ENCODE measurements at regions of chr10 and their contacts with region 1.

Region 1: DNA sequence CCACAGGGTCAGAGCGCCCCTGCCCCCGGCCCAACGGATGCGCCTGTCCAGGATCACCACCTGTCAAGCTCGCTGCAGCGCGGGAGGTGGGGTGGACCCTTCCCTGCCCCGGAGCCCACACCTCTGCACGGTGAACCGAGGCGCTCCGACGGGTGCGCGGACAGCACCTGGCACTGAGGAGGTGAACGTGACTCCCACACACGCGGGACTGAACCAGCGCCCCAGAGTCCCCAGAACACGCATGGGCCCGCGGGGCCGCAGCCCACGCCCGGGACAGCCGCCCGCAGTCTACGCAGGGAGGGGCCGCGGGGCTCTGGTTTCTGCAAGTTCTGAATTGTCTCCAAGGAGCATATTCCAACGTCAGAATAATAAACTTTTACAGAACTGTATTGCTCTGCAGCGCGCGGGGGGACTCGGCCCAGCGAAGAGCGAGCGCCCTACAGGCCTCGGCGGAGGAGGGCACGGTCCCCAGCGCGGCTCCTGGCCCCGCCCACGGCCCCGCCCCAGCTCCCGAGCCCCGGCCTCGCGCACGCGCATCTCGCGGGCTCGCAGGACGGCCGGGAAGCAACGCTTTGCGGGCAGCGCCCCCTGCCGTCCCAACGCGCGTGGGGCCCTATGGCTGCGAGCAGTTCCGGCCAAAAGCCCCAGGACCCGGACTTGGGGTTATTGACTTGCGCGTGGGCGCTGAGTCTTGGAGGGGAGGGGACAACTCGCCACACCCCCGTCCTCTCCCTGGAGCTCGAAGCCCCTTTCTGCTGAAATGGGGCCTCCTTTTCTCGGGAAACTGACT is 29.7 kb downstream of the OAT start:
- DNase-seq: peak; percentile 93
- H3K4me3 Mint-ChIP-seq: peak overlapping the region; percentile 29
- H3K27ac Mint-ChIP-seq: no peak overlapping the region
- H3K4me1 Mint-ChIP-seq: peaks cover 3% of the 10 kb centered on the region
- H3K27me3 Mint-ChIP-seq: no peaks in the 10 kb centered on the region

Region 2: GRCh38 chr10:123582084-123582989 is 806.7 kb before region 1 on chr10:
- CTCF ChIA-PET with region 1: interaction called, 4 read pairs
- POLR2A ChIA-PET with region 1: no interaction called
- intact Hi-C with region 1: loop called (anchors 10 kb)
- DNase-seq: peak; percentile 74
- H3K4me3 Mint-ChIP-seq: no peak overlapping the region
- H3K27ac Mint-ChIP-seq: no peak overlapping the region
- H3K4me1 Mint-ChIP-seq: no peaks in the 10 kb centered on the region
- H3K27me3 Mint-ChIP-seq: peaks cover 34% of the 10 kb centered on the region

Region 3: GRCh38 chr10:124259139-124259825 is 129.7 kb before region 1 on chr10:
- CTCF ChIA-PET with region 1: interaction called, 19 read pairs
- POLR2A ChIA-PET with region 1: no interaction called
- intact Hi-C with region 1: no loop called
- DNase-seq: peak; percentile 23
- H3K4me3 Mint-ChIP-seq: no peak overlapping the region
- H3K27ac Mint-ChIP-seq: no peak overlapping the region
- H3K4me1 Mint-ChIP-seq: no peaks in the 10 kb centered on the region
- H3K27me3 Mint-ChIP-seq: no peaks in the 10 kb centered on the region

Region 4: GRCh38 chr10:124289851-124290795 is 98.9 kb before region 1 on chr10:
- CTCF ChIA-PET with region 1: interaction called, 11 read pairs
- POLR2A ChIA-PET with region 1: no interaction called
- intact Hi-C with region 1: loop called (anchors 10 kb)
- DNase-seq: no peak
- H3K4me3 Mint-ChIP-seq: no peak overlapping the region
- H3K27ac Mint-ChIP-seq: no peak overlapping the region
- H3K4me1 Mint-ChIP-seq: peaks cover 3% of the 10 kb centered on the region
- H3K27me3 Mint-ChIP-seq: no peaks in the 10 kb centered on the region

Region 5: DNA sequence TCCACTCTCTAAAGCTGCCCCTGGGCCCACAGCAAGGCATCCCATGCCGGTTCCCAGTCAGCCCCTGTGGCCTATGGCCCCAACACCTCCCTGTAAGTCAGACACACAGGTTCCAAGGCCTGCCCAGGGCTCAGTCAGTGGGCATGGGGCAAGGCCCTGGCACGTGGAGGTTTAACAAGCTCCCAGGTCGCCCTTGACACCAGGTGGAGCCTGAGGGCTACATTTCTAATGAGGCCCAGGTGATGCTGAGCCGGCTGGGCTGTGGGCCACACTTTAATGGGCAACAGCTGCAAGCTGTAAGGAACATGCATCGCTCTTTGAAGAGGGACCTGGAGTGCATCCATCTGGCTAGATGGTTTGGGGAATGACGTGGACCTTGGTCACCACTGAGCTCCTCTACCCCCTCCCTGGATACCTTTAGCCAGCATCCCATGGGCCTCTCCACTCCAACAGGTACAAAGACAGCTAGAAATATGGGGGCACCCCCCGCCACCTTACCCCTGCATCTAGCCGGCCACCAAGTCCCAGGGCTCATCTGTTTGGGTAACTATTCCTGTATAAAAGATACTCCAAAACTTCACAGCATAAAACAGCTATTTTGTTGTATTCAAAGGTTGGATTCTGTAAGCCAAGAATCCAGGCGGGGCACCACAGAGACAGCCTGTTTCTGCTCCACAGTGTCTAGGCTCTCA is 92.8 kb before region 1 on chr10:
- CTCF ChIA-PET with region 1: interaction called, 11 read pairs
- POLR2A ChIA-PET with region 1: no interaction called
- intact Hi-C with region 1: loop called (anchors 10 kb)
- DNase-seq: no peak
- H3K4me3 Mint-ChIP-seq: no peak overlapping the region
- H3K27ac Mint-ChIP-seq: no peak overlapping the region
- H3K4me1 Mint-ChIP-seq: no peaks in the 10 kb centered on the region
- H3K27me3 Mint-ChIP-seq: no peaks in the 10 kb centered on the region

Region 6: GRCh38 chr10:124403548-124403947 is 14.5 kb after region 1 on chr10:
- CTCF ChIA-PET with region 1: interaction called, 33 read pairs
- POLR2A ChIA-PET with region 1: no interaction called
- intact Hi-C with region 1: no loop called
- DNase-seq: peak; percentile 25
- H3K4me3 Mint-ChIP-seq: no peak overlapping the region
- H3K27ac Mint-ChIP-seq: no peak overlapping the region
- H3K4me1 Mint-ChIP-seq: peaks cover 8% of the 10 kb centered on the region
- H3K27me3 Mint-ChIP-seq: no peaks in the 10 kb centered on the region

Region 7: GRCh38 chr10:124467165-124467564 is 78.1 kb after region 1 on chr10:
- CTCF ChIA-PET with region 1: no interaction called
- POLR2A ChIA-PET with region 1: no interaction called
- intact Hi-C with region 1: no loop called
- DNase-seq: no peak
- H3K4me3 Mint-ChIP-seq: no peak overlapping the region
- H3K27ac Mint-ChIP-seq: no peak overlapping the region
- H3K4me1 Mint-ChIP-seq: peaks cover 23% of the 10 kb centered on the region
- H3K27me3 Mint-ChIP-seq: no peaks in the 10 kb centered on the region